ENCODE measurements at regions of chr11 and their contacts with region 1.

Region 1: GRCh38 chr11:34653826-34654490 is 33.1 kb downstream of the EHF start:
- DNase-seq: peak; percentile 59
- H3K4me3 Mint-ChIP-seq: no peak overlapping the region
- H3K27ac Mint-ChIP-seq: no peak overlapping the region
- H3K4me1 Mint-ChIP-seq: peaks cover 43% of the 10 kb centered on the region
- H3K27me3 Mint-ChIP-seq: peaks cover 31% of the 10 kb centered on the region

Region 2: GRCh38 chr11:32821517-32821916 is 1832.4 kb before region 1 on chr11:
- CTCF ChIA-PET with region 1: no interaction called
- intact Hi-C with region 1: loop called (anchors 5 kb)
- DNase-seq: peak; percentile 10
- H3K4me3 Mint-ChIP-seq: no peak overlapping the region
- H3K27ac Mint-ChIP-seq: peak overlapping the region; percentile 4
- H3K4me1 Mint-ChIP-seq: peaks cover 25% of the 10 kb centered on the region
- H3K27me3 Mint-ChIP-seq: no peaks in the 10 kb centered on the region

Region 3: GRCh38 chr11:34438529-34439507 is 215.1 kb before region 1 on chr11 and contains the start of gene CAT:
- CTCF ChIA-PET with region 1: no interaction called
- intact Hi-C with region 1: loop called (anchors 2 kb)
- DNase-seq: peak; percentile 99
- H3K4me3 Mint-ChIP-seq: peak within 1 kb of the TSS; percentile 89
- H3K27ac Mint-ChIP-seq: peak within 1 kb of the TSS; percentile 85
- H3K4me1 Mint-ChIP-seq: peaks cover 29% of the 10 kb centered on the region
- H3K27me3 Mint-ChIP-seq: no peaks in the 10 kb centered on the region
- total RNA-seq, gene CAT: 28.3 to 29.1 TPM

Region 4: DNA sequence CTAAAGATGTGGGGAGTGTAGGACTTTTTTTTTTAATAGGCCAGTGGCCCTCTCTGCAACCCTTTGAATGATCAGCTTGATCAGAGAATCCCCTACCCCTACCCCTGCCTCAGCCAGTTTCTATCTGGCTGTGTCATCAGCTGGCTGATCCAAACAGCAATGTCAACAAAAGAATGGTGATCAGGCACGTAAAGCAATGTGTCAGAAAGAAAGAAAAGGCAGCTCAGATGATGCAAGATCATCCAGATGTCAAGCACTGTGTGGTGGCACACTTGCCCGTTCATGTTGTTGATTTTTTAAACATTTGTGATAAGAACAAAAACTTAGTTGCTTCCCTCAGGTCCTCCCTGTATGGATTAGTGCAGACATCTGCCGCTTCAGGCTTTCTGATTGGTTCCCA is 59.4 kb before region 1 on chr11:
- CTCF ChIA-PET with region 1: no interaction called
- intact Hi-C with region 1: no loop called
- DNase-seq: no peak
- H3K4me3 Mint-ChIP-seq: no peak overlapping the region
- H3K27ac Mint-ChIP-seq: no peak overlapping the region
- H3K4me1 Mint-ChIP-seq: peaks cover 4% of the 10 kb centered on the region
- H3K27me3 Mint-ChIP-seq: peaks cover 16% of the 10 kb centered on the region

Region 5: GRCh38 chr11:34633990-34634693 is 19.8 kb before region 1 on chr11:
- CTCF ChIA-PET with region 1: interaction called, 9 read pairs
- intact Hi-C with region 1: loop called (anchors 1 kb)
- DNase-seq: peak; percentile 20
- H3K4me3 Mint-ChIP-seq: no peak overlapping the region
- H3K27ac Mint-ChIP-seq: no peak overlapping the region
- H3K4me1 Mint-ChIP-seq: peaks cover 14% of the 10 kb centered on the region
- H3K27me3 Mint-ChIP-seq: no peaks in the 10 kb centered on the region

Region 6: GRCh38 chr11:35082321-35083182 is 428.6 kb after region 1 on chr11:
- CTCF ChIA-PET with region 1: no interaction called
- intact Hi-C with region 1: loop called (anchors 5 kb)
- DNase-seq: peak; percentile 89
- H3K4me3 Mint-ChIP-seq: peak overlapping the region; percentile 66
- H3K27ac Mint-ChIP-seq: peak overlapping the region; percentile 90
- H3K4me1 Mint-ChIP-seq: peaks cover 91% of the 10 kb centered on the region
- H3K27me3 Mint-ChIP-seq: no peaks in the 10 kb centered on the region

Region 7: DNA sequence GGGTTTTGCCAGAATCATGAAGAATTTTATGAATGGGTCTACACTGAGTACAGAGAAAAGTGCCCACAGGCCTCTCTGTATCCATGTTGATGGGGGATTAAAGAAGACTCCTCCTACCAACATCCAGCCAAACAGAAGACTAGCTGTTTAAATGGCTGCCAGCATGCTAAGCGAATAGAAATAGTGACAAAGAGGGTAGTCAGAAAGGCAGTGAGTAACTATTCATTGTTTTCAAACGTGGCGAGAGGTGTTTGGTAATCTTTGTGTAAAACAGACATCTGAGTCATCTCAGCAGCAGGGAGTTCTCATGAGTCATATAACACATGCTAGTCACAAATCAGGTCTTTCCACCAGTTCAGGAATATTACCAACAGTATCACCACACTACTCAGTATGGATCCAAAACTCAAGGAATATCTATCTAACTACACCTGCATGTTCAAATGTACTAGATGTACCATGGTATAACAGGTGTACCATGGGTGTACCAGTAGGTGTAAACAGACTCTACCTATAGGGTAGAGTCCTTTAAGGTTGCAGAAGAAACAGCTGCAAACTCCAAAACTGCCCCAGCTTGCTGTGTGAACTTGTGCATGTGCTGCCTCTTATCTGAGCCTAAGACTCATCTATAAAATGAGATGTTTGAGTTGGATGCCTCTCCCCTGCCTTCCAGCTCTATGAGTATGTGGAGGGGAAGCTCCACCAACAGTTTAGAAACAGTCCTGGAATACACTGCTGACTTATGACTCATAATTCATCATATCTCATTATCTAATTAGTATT is 683.4 kb after region 1 on chr11:
- CTCF ChIA-PET with region 1: no interaction called
- intact Hi-C with region 1: loop called (anchors 2 kb)
- DNase-seq: peak; percentile 65
- H3K4me3 Mint-ChIP-seq: no peak overlapping the region
- H3K27ac Mint-ChIP-seq: peak overlapping the region; percentile 82
- H3K4me1 Mint-ChIP-seq: peaks cover 41% of the 10 kb centered on the region
- H3K27me3 Mint-ChIP-seq: no peaks in the 10 kb centered on the region

Measured in activated naive CD4-positive, alpha-beta T cell treated with anti-CD3 and anti-CD28 coated beads for 36 hours (primary cell).